Activated T-helper 2 cell treated with anti-CD3 and anti-CD28 coated beads, Interferon-gamma antibody, Interleukin-2, Interleukin-4, amounts not matched to agents 10 μg/mL and 5 μg/mL and 100 μg/mL, durations not matched to agents 14 hours and 24 hours and 36 hours (primary cell): ENCODE measurements at regions of chr11 and their contacts with region 1.

Region 1: DNA sequence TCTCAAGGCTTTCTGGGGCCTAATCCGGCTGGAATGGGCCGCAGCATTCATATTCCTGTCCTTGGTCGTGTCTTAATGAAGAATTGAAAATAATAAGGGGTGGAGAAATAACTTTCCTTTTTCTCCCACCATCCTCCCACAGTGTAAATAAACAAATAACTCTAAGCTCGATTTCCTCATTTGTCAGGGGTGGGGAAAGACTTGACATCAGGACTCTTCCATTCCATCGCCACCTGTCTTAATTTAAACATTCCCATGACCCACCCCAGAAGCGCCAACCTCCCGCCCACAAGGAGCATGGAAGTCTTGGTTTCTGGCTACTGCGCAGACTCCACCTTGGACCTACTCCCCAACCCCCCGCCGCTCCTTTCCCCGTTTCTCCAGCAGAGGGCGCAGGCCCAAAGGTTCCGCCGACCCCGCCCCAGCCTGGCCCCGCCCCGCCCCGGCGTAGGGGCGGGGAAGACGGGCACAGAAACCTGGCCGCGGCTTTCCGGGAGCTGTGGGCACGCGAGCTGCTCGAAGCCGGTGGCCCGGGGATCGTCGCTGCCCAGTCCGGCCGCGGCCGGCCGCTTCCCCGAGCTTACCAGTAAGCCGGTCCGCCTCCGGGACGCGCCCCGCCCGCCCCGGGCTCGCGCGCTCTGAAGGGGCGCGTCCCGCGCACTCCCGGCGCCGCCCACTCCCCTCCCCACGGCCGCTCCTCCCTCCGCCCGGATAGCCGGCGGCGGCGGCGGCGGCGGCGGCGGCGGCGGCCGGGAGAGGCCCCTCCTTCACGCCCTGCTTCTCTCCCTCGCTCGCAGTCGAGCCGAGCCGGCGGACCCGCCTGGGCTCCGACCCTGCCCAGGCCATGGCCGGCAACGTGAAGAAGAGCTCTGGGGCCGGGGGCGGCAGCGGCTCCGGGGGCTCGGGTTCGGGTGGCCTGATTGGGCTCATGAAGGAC is at the start of gene CBL:
- DNase-seq: peak; percentile 89
- H3K4me3 Mint-ChIP-seq: peak within 1 kb of the TSS; percentile 93
- H3K27ac Mint-ChIP-seq: peak within 1 kb of the TSS; percentile 94
- H3K4me1 Mint-ChIP-seq: peaks cover 22% of the 10 kb centered on the region
- H3K27me3 Mint-ChIP-seq: peaks cover 2% of the 10 kb centered on the region
- total RNA-seq, gene CBL: 38.6 and 39.6 TPM in 2 replicates

Region 2: DNA sequence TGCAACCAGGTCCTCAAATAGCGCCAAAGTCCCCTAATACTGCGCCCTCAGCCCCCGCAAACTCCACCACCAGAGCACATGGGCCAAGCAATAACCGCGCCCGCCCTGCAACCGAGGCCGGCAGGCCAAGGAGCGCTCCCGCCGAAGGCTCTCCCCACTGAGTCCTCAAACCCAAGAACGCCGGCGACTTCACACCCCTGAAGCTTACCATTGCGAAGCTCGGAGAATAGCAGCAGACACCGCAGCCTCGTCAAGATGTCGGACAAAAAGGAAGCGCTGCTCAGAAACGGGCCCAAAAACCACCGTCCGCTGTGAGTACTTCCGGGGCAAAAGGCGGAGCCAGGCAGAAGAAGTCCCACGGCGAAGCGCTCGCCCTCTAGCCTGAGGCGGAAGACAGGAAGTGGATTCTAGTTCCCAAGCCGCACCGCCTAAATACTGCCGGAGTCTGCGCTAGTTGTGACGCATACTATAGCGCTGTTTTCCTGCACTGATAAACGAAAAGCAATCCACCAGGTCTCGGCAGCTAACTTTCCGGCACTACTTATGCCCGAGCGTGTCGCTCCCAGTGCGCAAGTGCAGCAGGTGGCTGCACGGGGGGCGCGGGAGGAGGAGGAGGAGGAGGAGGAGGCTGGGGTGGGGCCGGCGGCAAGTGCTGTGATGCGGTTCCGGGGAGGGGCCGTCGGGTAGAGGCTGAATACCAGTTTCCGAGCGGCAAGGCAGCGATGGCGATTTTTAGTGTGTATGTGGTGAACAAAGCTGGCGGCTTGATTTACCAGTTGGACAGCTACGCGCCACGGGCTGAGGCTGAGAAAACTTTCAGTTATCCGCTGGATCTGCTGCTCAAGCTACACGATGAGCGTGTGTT is 187.5 kb before region 1 on chr11 and contains the starts of genes RPS25 and TRAPPC4:
- intact Hi-C with region 1: loop called (anchors 2 kb)
- DNase-seq: peak; percentile 93
- H3K4me3 Mint-ChIP-seq: peak within 1 kb of the TSS; percentile 99
- H3K27ac Mint-ChIP-seq: peak within 1 kb of the TSS; percentile 100
- H3K4me1 Mint-ChIP-seq: peaks cover 25% of the 10 kb centered on the region
- H3K27me3 Mint-ChIP-seq: no peaks in the 10 kb centered on the region
- total RNA-seq, gene RPS25: 1,728 and 1,773 TPM in 2 replicates
- total RNA-seq, gene TRAPPC4: 121 and 128 TPM in 2 replicates

Region 3: GRCh38 chr11:119108146-119108856 is 97.5 kb before region 1 on chr11:
- intact Hi-C with region 1: loop called (anchors 1 kb)
- DNase-seq: no peak
- H3K4me3 Mint-ChIP-seq: peak overlapping the region; percentile 98
- H3K27ac Mint-ChIP-seq: peak overlapping the region; percentile 92
- H3K4me1 Mint-ChIP-seq: peaks cover 39% of the 10 kb centered on the region
- H3K27me3 Mint-ChIP-seq: no peaks in the 10 kb centered on the region

Region 4: DNA sequence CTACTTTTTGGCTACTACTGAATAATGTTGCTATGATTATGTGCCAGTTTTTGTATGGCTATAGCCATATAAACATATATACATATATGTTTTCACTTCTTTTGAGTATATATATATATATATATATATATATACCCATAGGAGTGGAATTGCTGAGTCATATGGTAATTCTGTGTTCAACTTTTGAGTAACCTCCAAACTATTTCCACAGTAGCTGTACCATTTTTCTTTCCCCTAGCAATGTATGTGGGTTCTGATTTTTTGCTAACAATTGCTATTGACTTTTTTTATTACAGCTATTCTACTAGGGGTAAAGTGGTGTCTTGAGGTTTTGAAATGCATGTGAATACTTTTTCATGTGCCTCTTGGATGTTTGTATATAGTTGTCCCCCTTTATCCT is 30.6 kb after region 1 on chr11:
- intact Hi-C with region 1: loop called (anchors 2 kb)
- DNase-seq: no peak
- H3K4me3 Mint-ChIP-seq: peak overlapping the region; percentile 4
- H3K27ac Mint-ChIP-seq: peak overlapping the region; percentile 87
- H3K4me1 Mint-ChIP-seq: peaks cover 43% of the 10 kb centered on the region
- H3K27me3 Mint-ChIP-seq: no peaks in the 10 kb centered on the region

Region 5: DNA sequence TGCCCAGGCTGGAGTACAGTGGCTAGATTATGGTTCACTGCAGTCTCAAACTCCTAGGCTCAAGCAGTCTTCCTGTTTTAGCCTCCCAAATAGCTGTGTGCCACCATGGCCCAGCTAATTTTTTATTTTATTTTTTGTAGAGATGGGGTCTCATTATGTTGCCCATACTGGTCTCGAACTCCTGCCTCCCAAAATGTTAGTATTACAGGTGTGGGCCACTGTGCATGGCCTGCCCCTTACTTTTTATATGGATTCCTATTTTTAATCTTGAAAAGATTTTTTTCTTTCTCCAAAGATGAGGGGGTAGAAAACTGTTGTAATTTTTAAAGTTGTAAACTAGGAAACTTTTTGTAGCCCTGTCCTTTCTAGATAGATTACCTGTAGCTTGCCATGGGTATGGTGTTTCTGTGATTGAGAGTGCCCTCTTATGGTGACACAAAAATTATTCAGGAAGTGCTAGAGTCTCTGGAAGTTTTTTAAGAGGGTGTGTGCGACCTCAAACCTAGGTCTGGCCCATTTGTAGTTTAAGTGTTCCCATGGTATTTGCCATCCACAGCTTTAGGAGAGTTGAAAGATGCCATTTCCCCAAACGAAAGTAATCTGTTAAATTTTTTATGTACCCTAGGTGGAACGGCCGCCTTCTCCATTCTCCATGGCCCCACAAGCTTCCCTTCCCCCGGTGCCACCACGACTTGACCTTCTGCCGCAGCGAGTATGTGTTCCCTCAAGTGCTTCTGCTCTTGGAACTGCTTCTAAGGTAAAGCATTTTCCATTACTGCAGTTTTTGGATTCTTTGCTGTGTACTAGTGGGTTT is 78.7 kb after region 1 on chr11:
- intact Hi-C with region 1: loop called (anchors 1 kb)
- DNase-seq: no peak
- H3K4me3 Mint-ChIP-seq: no peak overlapping the region
- H3K27ac Mint-ChIP-seq: peak overlapping the region; percentile 30
- H3K4me1 Mint-ChIP-seq: peaks cover 25% of the 10 kb centered on the region
- H3K27me3 Mint-ChIP-seq: no peaks in the 10 kb centered on the region